Endothelial cell of umbilical vein (primary cell): ENCODE measurements at regions of chr18 and their contacts with region 1.

Region 1: DNA sequence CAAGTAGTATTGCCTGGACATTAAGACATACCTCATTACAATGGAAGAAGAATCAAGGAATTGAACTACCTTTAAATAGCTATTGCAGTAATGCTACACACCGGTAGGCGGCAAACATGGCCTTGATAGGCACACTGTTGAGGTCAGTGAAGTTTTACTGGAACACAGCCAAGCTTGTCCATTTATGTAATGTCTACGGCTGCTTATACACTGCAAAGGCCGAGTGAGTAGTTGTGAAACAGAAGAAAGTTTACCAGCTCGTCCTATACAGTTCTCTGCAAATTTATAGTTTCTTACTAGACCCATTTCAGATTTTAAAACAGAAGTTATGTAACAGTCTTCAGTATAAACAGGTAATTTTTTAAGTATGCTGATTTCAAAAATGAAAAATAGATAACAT is 38.8 kb downstream of the PPP4R1 start:
- DNase-seq: peak; percentile 94
- H3K4me3 ChIP-seq: no peak overlapping the region
- H3K27ac ChIP-seq: no peak overlapping the region
- H3K4me1 ChIP-seq: peaks cover 28% of the 10 kb centered on the region
- H3K27me3 ChIP-seq: no peaks in the 10 kb centered on the region
- CTCF ChIP-seq: peak; percentile 80 to 84
- POLR2A ChIP-seq: no peak

Region 2: DNA sequence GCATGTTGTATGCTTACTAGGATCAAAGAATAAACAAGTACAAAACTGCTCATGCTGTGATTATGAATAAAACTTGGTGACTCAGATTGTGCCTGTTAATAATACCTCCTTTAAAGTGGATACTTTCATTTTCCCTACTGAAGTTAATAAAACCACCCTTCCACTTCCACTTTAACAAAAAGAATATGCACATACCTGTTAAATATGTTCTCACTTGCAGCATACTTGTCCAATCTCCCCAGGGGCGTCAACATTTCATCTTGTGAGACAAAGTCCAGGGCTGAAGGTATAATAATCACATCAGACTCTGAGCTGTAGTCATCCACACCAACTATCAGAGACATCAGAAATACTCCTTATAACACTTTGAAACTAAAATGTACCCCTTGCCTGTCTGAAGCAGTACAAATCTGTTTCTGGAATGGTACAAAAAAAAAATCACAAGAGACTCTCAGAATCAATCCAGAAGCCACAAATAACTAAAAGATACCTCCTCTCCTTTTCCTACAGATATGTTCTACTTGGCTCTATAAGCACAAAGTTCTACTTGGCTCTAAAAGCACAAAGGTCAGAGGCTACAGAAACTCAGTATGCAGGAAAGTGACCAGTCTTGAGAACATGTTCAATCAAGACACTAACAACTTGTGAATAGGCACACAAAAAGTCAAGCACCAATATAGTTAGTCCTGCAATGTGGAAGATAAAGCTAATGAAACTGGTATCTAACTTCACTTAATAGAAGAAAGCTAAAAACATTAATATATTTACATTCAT is 19.5 kb after region 1 on chr18:
- CTCF ChIA-PET with region 1: interaction called, 19 read pairs
- POLR2A ChIA-PET with region 1: no interaction called
- dilution Hi-C with region 1: no loop called
- intact Hi-C with region 1: no loop called
- DNase-seq: peak; percentile 58
- H3K4me3 ChIP-seq: no peak overlapping the region
- H3K27ac ChIP-seq: peak overlapping the region; percentile 3
- H3K4me1 ChIP-seq: peaks cover 20% of the 10 kb centered on the region
- H3K27me3 ChIP-seq: no peaks in the 10 kb centered on the region
- CTCF ChIP-seq: no peak
- POLR2A ChIP-seq: no peak

Region 3: DNA sequence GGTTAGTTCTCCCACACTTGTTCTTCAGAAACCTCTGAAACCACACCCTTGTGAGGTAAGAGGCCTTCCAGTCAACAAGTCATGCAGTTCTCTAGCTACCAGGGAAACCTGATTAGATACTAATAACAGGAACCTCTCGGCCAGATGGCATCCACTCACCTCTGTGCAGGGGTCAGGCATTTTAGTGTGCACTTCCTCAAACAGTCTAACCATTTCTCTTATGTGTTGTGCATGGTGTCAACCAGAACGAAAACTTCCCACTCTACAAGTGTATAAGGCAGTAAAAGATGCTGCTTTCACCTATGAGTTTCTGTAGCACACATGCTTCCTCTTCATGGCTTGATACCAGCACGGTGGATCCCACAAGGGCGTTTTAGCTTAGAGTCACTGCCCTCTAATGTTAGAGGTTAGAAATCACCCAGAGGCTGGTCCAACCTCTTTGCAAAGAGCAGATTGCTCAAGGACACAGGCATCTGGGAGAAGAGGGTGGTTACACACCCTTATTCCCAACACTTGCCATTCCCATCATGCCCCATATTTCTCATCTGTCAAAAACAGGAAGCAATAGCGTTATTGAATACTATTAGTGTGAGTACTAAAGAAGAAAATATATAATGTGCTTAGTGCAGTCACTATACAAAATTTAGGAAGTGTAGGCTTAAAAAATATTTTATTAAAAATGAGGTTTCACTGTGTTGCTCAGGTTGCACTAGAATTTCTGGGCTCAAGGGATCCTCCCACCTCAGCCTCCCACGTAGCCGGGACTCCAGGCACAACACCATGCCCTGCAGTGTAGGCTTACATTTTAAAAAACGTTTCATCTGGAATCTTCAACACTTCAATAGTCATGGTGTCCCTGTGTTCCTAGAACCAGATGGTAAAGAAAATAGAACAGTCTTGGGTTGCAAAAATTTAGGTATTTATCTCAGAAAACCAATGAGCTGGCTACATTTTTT is 98.0 kb after region 1 on chr18:
- CTCF ChIA-PET with region 1: interaction called, 32 read pairs
- POLR2A ChIA-PET with region 1: no interaction called
- dilution Hi-C with region 1: no loop called
- intact Hi-C with region 1: loop called (anchors 1 kb)
- DNase-seq: peak; percentile 58
- H3K4me3 ChIP-seq: no peak overlapping the region
- H3K27ac ChIP-seq: no peak overlapping the region
- H3K4me1 ChIP-seq: no peaks in the 10 kb centered on the region
- H3K27me3 ChIP-seq: no peaks in the 10 kb centered on the region
- CTCF ChIP-seq: peak in 1 of 2 donors; percentile 31
- POLR2A ChIP-seq: no peak

Region 4: DNA sequence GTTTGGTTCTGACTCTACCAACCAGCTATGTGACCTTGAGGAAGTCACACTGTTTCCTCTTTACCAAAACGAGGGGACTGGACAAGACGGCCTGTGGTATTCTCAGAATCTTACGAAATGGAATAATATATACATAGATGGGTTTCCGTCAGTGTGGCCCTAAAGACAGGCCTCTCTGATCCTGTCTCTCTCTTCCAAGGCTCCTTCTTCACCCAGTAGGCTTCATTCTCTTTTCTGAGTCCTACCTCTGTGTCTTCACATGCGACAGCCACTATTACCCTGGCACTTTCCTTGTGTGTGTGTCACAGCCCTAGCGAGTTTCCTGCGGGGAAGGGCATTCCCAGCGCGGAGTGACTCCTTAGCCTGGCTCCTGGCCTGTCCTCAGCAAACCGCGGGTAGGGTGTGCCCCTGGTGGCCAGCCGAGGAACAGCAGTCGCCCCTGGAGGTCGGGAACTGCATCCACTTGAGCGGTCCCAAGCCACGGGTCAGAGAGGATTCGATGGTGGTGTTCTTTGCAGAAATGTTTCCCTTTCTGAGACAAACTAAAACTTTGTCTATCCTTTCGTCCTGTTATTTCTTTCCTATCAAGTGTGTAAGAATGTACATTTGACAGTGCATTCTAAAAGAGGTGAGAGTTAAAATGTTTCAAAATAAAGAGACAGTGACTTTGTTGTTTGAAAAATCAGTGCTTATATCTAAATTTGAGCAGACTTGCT is 195.9 kb after region 1 on chr18:
- CTCF ChIA-PET with region 1: interaction called, 7 read pairs
- POLR2A ChIA-PET with region 1: no interaction called
- dilution Hi-C with region 1: no loop called
- intact Hi-C with region 1: loop called (anchors 1 kb)
- DNase-seq: peak; percentile 81
- H3K4me3 ChIP-seq: no peak overlapping the region
- H3K27ac ChIP-seq: peak overlapping the region; percentile 14
- H3K4me1 ChIP-seq: peaks cover 4% of the 10 kb centered on the region
- H3K27me3 ChIP-seq: no peaks in the 10 kb centered on the region
- CTCF ChIP-seq: peak; percentile 97 to 99
- POLR2A ChIP-seq: no peak

Region 5: DNA sequence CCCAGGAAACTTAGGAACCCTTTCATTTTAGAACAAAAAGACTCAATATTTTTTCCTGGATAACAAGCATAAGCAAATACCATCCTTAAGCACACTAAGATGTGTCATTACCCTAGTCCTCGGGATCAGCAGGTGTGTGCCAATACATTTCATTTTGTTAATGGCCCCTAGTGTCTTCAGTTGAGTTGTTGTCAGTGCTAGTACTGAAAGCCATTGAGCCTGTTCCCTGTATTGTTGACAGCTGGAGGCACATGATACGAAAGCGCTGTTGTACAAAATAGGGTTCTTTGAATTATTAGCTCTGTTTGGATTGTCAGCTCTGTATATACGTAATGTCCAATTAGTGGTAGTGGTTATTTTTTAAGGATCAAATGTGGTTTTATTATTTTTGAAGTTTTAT is 367.8 kb after region 1 on chr18:
- CTCF ChIA-PET with region 1: interaction called, 3 read pairs
- POLR2A ChIA-PET with region 1: no interaction called
- dilution Hi-C with region 1: no loop called
- intact Hi-C with region 1: loop called (anchors 5 kb)
- DNase-seq: no peak
- H3K4me3 ChIP-seq: no peak overlapping the region
- H3K27ac ChIP-seq: no peak overlapping the region
- H3K4me1 ChIP-seq: no peaks in the 10 kb centered on the region
- H3K27me3 ChIP-seq: no peaks in the 10 kb centered on the region
- CTCF ChIP-seq: no peak
- POLR2A ChIP-seq: no peak